Activated B cell treated with CpG ODN at 0.5 μM for 24 hours (primary cell): ENCODE measurements at regions of chr15 and their contacts with region 1.

Region 1: DNA sequence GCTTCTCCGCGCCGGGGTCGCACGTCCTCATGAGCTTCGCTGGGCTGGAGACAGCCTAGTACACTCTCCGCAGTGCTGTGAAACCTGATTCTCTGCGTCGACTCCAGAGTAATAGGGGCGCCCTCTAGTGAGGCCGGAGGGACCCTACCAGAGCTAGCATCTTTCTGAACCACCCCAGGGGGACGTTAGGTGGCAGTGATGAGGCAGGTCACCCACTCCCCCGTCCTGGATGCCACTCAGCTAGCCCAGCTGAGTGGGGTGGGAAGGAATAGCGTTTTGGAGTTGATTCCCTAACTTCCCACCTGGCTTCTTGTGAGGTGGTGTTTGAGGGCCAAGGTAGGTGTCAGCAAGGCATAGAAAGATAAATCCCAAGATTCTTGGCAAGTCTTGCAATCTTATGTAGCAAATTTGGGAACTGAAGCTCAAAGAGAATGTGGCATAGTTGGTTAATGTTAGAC is 4.0 kb downstream of the DUOXA2 start:
- DNase-seq: peak; percentile 71
- ATAC-seq: peak; percentile 99
- H3K4me3 Mint-ChIP-seq: peak overlapping the region; percentile 81
- H3K27ac Mint-ChIP-seq: no peak overlapping the region
- H3K4me1 Mint-ChIP-seq: peaks cover 42% of the 10 kb centered on the region
- H3K27me3 Mint-ChIP-seq: peaks cover 76% of the 10 kb centered on the region
- CTCF ChIP-seq: peak; percentile 96

Region 2: DNA sequence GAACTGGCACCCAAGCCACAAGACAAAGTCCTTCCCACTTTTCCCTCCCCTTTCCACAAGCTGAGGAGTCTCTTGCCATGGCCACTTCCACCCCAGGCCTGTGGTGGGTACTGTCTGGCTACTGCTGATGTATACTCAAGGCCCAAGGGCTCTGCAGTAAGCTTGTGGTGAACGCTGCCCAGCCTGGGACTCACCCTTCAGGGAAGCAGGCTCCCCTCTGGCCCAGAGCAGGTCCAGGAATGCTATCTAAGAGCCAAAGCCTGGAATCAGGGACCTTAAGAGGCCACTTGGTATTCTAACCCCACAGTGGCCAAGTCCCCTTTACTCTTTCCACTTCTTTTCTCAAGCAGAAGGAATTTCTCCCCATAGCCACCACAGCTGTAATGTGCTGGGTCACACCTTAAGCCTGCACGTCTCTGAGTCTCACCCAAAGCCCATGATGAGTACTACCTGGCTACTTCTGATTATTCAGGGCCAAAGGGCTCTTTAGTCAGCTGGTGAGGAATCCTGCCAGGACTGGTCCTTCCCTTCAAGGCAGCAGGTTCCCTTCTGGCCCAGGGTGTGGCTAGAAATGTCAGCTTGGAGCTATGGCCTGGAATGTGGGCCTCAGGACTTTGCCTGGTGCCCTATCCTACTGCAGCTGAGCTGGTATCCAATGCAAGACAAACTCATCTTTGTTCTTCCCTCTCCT is 411.1 kb before region 1 on chr15:
- CTCF ChIA-PET with region 1: no interaction called
- POLR2A ChIA-PET with region 1: no interaction called
- intact Hi-C with region 1: no loop called
- DNase-seq: no peak
- ATAC-seq: no peak
- H3K4me3 Mint-ChIP-seq: no peak overlapping the region
- H3K27ac Mint-ChIP-seq: no peak overlapping the region
- H3K4me1 Mint-ChIP-seq: peaks cover 22% of the 10 kb centered on the region
- H3K27me3 Mint-ChIP-seq: no peaks in the 10 kb centered on the region
- CTCF ChIP-seq: no peak

Region 3: GRCh38 chr15:44968475-44968874 is 149.7 kb before region 1 on chr15:
- CTCF ChIA-PET with region 1: interaction called, 20 read pairs
- POLR2A ChIA-PET with region 1: interaction called, 3 read pairs
- intact Hi-C with region 1: loop called (anchors 2 kb)
- DNase-seq: no peak
- ATAC-seq: no peak
- H3K4me3 Mint-ChIP-seq: no peak overlapping the region
- H3K27ac Mint-ChIP-seq: no peak overlapping the region
- H3K4me1 Mint-ChIP-seq: no peaks in the 10 kb centered on the region
- H3K27me3 Mint-ChIP-seq: peaks cover 2% of the 10 kb centered on the region
- CTCF ChIP-seq: no peak

Region 4: GRCh38 chr15:45037936-45038335 is 80.2 kb before region 1 on chr15:
- CTCF ChIA-PET with region 1: interaction called, 15 read pairs
- POLR2A ChIA-PET with region 1: no interaction called
- intact Hi-C with region 1: loop called (anchors 2 kb)
- DNase-seq: no peak
- ATAC-seq: no peak
- H3K4me3 Mint-ChIP-seq: no peak overlapping the region
- H3K27ac Mint-ChIP-seq: peak overlapping the region; percentile 31
- H3K4me1 Mint-ChIP-seq: peaks cover 35% of the 10 kb centered on the region
- H3K27me3 Mint-ChIP-seq: no peaks in the 10 kb centered on the region
- CTCF ChIP-seq: no peak

Region 5: DNA sequence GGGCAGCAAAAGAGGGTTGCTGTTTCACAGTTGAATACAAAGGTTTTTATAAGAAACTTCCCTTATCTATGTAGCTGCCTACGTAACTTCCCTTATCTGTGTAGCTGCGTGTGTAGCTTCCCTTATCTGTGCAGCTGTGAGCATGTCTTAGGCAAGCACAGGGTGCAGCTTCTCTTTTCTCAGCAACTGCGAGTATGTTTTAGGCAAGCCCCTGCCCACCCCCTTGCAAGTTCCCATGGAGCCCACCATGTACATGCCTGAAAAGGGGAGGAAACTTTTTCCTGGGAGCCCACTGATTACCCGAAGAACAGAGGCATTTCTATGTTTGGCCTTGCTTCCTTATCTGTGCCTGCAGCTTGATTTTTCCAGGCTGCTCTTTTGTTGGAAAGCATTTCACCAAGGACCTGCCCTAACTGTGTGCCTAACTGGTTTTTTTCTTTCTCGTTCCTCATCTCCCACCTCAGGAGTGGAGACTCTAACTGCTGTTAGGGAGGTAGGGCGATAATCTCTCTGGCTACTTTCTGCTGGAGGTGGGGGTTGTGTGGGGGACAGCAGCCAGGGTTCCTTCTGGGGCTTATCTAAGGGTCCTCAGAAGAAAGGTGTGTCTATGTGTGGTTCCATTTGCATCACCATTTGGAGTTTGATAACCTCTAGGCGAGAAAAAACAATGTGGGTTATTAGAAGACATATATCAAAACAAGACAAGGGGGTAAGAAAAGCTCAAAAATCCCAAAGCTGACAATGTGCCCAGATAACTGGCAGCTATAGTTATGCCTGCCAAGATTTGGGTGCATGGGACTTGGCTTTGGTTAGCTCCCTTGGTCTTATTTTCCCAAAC is 69.1 kb before region 1 on chr15:
- CTCF ChIA-PET with region 1: interaction called, 10 read pairs
- POLR2A ChIA-PET with region 1: interaction called, 9 read pairs
- intact Hi-C with region 1: no loop called
- DNase-seq: no peak
- ATAC-seq: peak; percentile 87
- H3K4me3 Mint-ChIP-seq: peak overlapping the region; percentile 78
- H3K27ac Mint-ChIP-seq: peak overlapping the region; percentile 98
- H3K4me1 Mint-ChIP-seq: peaks cover 39% of the 10 kb centered on the region
- H3K27me3 Mint-ChIP-seq: no peaks in the 10 kb centered on the region
- CTCF ChIP-seq: no peak

Region 6: GRCh38 chr15:45136378-45136764 is 18.2 kb after region 1 on chr15:
- CTCF ChIA-PET with region 1: interaction called, 4 read pairs
- POLR2A ChIA-PET with region 1: no interaction called
- intact Hi-C with region 1: loop called (anchors 1 kb)
- DNase-seq: no peak
- ATAC-seq: no peak
- H3K4me3 Mint-ChIP-seq: peak overlapping the region; percentile 59
- H3K27ac Mint-ChIP-seq: no peak overlapping the region
- H3K4me1 Mint-ChIP-seq: peaks cover 11% of the 10 kb centered on the region
- H3K27me3 Mint-ChIP-seq: peaks cover 40% of the 10 kb centered on the region
- CTCF ChIP-seq: no peak

Region 7: DNA sequence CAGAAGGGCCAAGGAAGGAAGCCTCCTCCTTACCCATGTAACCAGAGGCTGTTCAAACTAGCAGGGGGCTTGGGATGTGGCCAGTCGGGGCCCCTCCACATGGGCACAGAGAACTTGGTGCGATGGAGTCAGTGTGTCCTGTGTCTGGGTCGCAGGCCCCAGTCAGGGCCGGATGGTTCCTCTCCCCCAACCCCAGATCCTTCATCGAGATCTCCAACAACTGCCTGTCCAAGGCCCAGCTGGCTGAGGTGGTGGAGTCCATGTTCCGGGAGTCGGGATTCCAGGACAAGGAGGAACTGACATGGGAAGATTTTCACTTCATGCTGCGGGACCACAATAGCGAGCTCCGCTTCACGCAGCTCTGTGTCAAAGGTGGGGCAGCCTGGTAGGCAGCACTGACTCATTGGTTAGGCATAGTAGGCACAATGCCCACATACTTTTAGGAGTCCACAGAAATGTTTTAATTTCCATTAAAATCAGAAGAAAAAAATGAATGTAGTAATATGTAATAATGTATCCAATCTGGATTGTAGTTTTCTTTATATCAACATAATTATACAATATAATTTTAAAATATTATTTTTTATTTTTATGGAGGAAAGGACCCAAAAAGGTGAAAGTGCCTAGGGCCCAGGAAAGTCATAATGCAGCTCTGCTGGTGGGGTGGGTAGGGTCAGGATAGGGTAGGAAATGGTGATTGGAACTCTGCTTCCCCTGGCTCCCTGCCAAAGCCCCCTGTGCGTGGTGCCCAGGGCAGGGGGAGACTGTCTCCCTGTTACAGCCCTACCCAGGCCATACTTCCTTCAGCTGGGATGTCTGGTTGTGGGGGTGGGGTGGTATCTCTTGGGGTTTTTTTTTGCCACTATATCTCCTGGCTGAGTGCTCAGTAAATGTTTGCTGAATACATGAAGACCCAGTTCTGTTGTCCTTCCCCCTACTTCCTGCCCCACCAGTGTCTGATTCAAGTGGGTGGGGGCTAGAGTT is 30.2 kb after region 1 on chr15:
- CTCF ChIA-PET with region 1: no interaction called
- POLR2A ChIA-PET with region 1: no interaction called
- intact Hi-C with region 1: no loop called
- DNase-seq: no peak
- ATAC-seq: no peak
- H3K4me3 Mint-ChIP-seq: no peak overlapping the region
- H3K27ac Mint-ChIP-seq: no peak overlapping the region
- H3K4me1 Mint-ChIP-seq: no peaks in the 10 kb centered on the region
- H3K27me3 Mint-ChIP-seq: no peaks in the 10 kb centered on the region
- CTCF ChIP-seq: no peak

Region 8: DNA sequence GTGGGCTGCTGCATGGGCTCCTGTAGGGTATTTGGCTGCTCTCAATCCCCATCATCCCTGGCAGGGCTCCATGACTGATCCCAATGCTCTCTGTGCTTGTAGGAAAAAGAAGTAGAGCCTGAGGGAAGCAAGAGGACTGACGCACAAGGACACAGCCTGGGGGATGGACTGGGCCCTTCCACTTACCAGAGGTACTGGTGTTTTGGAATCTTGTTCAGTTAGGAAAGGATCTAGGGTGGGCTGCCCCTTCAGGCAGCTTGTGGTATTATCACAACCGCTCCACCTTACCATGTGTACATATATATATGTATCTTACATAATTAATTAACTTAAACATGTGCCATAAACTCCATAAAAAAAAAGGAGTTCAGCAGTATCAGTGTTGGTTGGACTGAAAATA is 135.2 kb after region 1 on chr15:
- CTCF ChIA-PET with region 1: no interaction called
- POLR2A ChIA-PET with region 1: no interaction called
- intact Hi-C with region 1: no loop called
- DNase-seq: no peak
- ATAC-seq: no peak
- H3K4me3 Mint-ChIP-seq: no peak overlapping the region
- H3K27ac Mint-ChIP-seq: no peak overlapping the region
- H3K4me1 Mint-ChIP-seq: no peaks in the 10 kb centered on the region
- H3K27me3 Mint-ChIP-seq: peaks cover 4% of the 10 kb centered on the region
- CTCF ChIP-seq: no peak

Region 9: GRCh38 chr15:45391746-45392583 is 273.8 kb after region 1 on chr15:
- CTCF ChIA-PET with region 1: no interaction called
- POLR2A ChIA-PET with region 1: no interaction called
- intact Hi-C with region 1: loop called (anchors 2 kb)
- DNase-seq: no peak
- ATAC-seq: peak; percentile 93
- H3K4me3 Mint-ChIP-seq: peak overlapping the region; percentile 30
- H3K27ac Mint-ChIP-seq: peak overlapping the region; percentile 80
- H3K4me1 Mint-ChIP-seq: peaks cover 22% of the 10 kb centered on the region
- H3K27me3 Mint-ChIP-seq: no peaks in the 10 kb centered on the region
- CTCF ChIP-seq: no peak

Region 10: DNA sequence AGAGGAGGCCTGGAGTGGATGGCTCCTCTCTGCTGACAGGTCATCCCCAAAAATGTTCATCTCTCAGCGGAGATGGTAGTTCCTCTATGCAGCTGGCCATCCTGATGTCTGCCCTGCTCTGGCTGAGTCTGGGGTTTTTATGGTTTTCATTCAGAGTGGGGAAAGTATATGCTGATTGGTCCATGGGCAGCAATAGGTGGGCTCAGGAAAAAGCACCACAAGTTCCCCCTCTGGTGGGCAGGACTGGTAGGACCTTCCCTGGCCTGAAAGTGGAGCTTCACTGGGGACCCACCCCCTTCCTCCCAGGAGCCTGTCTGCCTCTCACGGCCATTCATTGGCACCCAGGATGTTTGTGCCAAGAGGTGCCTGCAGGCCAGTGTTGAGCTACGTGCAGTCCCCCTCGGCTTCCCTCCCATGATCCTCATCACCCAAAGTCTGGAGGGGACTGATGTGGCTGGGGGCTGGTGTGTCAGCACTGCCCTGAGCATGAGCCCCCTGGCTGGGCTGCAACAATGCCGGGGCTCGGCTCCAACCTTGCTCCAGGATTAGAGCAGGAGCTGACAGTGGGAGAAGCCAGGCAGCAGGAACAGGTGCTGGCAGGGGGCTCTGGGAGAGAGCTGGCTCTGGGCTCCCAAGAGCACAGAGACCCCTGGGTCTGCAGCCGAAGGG is 455.9 kb after region 1 on chr15:
- CTCF ChIA-PET with region 1: no interaction called
- POLR2A ChIA-PET with region 1: no interaction called
- intact Hi-C with region 1: no loop called
- DNase-seq: no peak
- ATAC-seq: peak; percentile 40
- H3K4me3 Mint-ChIP-seq: no peak overlapping the region
- H3K27ac Mint-ChIP-seq: no peak overlapping the region
- H3K4me1 Mint-ChIP-seq: peaks cover 26% of the 10 kb centered on the region
- H3K27me3 Mint-ChIP-seq: no peaks in the 10 kb centered on the region
- CTCF ChIP-seq: no peak

Region 11: GRCh38 chr15:45611305-45611704 is 493.1 kb after region 1 on chr15:
- CTCF ChIA-PET with region 1: no interaction called
- POLR2A ChIA-PET with region 1: no interaction called
- intact Hi-C with region 1: loop called (anchors 2 kb)
- DNase-seq: no peak
- ATAC-seq: no peak
- H3K4me3 Mint-ChIP-seq: no peak overlapping the region
- H3K27ac Mint-ChIP-seq: no peak overlapping the region
- H3K4me1 Mint-ChIP-seq: peaks cover 12% of the 10 kb centered on the region
- H3K27me3 Mint-ChIP-seq: no peaks in the 10 kb centered on the region
- CTCF ChIP-seq: no peak